Mammary epithelial cell (primary cell): ENCODE measurements at regions of chr17 and their contacts with region 1.

Region 1: DNA sequence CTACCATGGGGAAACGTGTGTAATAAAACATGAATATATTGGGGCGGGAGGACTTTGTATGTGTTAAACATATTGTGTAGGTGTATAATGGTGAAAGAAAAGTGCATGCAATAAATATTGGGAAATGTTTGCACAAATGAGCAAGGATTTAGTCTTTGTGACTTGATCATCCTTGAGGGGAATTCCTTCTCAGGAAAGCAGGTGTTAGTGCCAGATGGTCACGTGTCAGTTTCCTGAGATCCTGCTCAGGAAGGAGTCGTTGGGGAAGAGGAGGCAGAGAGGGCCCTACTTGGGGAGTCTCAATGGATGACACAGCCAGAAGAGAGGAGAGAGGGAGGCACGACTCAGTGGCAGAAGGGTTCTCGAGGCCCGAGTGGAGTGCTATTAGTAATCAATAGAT is 53.2 kb downstream of the MSI2 start:
- DNase-seq: peak; percentile 34
- H3K4me3 ChIP-seq: no peak overlapping the region
- H3K27ac ChIP-seq: no peak overlapping the region
- H3K4me1 ChIP-seq: peaks cover 16% of the 10 kb centered on the region
- H3K27me3 ChIP-seq: no peaks in the 10 kb centered on the region
- CTCF ChIP-seq: no peak

Region 2: GRCh38 chr17:57293077-57293476 is 16.4 kb before region 1 on chr17:
- CTCF ChIA-PET with region 1: no interaction called
- dilution Hi-C with region 1: no loop called
- in situ Hi-C with region 1: no loop called
- intact Hi-C with region 1: loop called (anchors 2 kb)
- DNase-seq: peak; percentile 92
- H3K4me3 ChIP-seq: no peak overlapping the region
- H3K27ac ChIP-seq: peak overlapping the region; percentile 23
- H3K4me1 ChIP-seq: peaks cover 36% of the 10 kb centered on the region
- H3K27me3 ChIP-seq: no peaks in the 10 kb centered on the region
- CTCF ChIP-seq: no peak